ENCODE measurements at regions of chr12 and their contacts with region 1.

Region 1: GRCh38 chr12:52667511-52667910 is 12.7 kb downstream of the KRT1 start:
- DNase-seq: no peak
- H3K4me3 Mint-ChIP-seq: no peak overlapping the region
- H3K27ac Mint-ChIP-seq: no peak overlapping the region
- H3K4me1 Mint-ChIP-seq: no peaks in the 10 kb centered on the region
- H3K27me3 Mint-ChIP-seq: no peaks in the 10 kb centered on the region
- CTCF ChIP-seq: no peak

Region 2: GRCh38 chr12:52655720-52656124 is 11.8 kb before region 1 on chr12:
- CTCF ChIA-PET with region 1: no interaction called
- intact Hi-C with region 1: loop called (anchors 1 kb)
- DNase-seq: peak; percentile 20
- H3K4me3 Mint-ChIP-seq: no peak overlapping the region
- H3K27ac Mint-ChIP-seq: no peak overlapping the region
- H3K4me1 Mint-ChIP-seq: peaks cover 9% of the 10 kb centered on the region
- H3K27me3 Mint-ChIP-seq: peaks cover 78% of the 10 kb centered on the region
- CTCF ChIP-seq: no peak

Region 3: DNA sequence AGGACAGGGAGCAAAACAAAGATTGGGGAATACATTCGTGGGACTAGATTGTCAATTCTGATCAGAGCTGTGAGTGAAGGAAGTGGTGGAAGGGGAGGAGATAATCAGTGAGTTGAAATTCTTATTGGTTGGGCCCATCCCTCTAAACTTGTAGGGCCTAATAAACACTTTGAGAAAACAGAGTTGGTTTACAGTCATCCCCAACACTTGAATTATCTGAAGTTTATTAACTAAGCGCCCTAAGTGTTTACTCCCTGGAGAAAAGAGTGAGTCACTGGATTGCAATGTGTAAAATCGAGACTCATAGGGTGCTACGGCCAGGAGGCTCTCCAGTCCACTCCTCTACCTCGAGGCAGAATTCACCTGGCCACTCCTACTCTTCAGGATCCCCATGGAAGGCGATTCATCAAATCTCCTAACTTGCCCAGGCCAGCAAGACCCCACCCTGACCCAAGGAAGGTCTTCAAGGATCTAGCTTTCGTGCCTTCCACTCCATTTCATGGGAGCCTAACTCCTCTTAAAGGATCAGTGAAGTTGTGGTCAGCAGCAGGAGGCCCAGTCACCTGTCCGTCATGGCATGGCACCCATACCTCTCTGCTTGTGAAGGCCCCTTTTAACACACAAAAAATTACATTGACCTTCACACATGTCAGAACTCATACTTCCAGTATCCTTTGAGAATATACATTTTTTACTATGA is 131.7 kb after region 1 on chr12:
- CTCF ChIA-PET with region 1: no interaction called
- intact Hi-C with region 1: no loop called
- DNase-seq: peak; percentile 18
- H3K4me3 Mint-ChIP-seq: no peak overlapping the region
- H3K27ac Mint-ChIP-seq: no peak overlapping the region
- H3K4me1 Mint-ChIP-seq: peaks cover 26% of the 10 kb centered on the region
- H3K27me3 Mint-ChIP-seq: peaks cover 16% of the 10 kb centered on the region
- CTCF ChIP-seq: no peak

Region 4: GRCh38 chr12:52870351-52871290 is 203.1 kb after region 1 on chr12:
- CTCF ChIA-PET with region 1: interaction called, 5 read pairs
- intact Hi-C with region 1: loop called (anchors 5 kb)
- DNase-seq: peak; percentile 81
- H3K4me3 Mint-ChIP-seq: no peak overlapping the region
- H3K27ac Mint-ChIP-seq: peak overlapping the region; percentile 99
- H3K4me1 Mint-ChIP-seq: peaks cover 67% of the 10 kb centered on the region
- H3K27me3 Mint-ChIP-seq: no peaks in the 10 kb centered on the region
- CTCF ChIP-seq: peak; percentile 39

Measured in Calu3 (cell line).